PC-9 (cell line): ENCODE measurements at regions of chr5 and their contacts with region 1.

Region 1: DNA sequence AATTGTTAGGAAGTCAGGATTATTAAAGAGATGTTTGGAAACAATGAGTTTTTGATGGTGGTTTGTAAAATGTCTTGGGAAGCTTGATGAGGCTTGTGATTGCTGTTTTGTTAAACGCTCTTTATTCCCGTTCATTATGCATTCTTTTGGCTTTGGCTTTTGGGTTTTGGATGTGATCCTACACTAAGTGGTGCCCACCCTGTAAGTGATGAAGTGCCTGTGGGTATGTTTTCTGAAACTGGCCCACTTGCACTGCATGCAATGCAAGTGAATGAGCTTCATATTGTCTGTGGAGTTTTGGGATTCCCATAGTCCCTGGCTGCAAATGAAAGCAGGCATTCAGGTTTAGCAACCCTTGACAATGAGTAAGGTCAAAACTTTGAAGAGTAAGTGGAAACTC is 1035.5 kb upstream of the WWC1 start:
- DNase-seq: no peak
- H3K4me3 ChIP-seq: no peak overlapping the region
- H3K27ac ChIP-seq: no peak overlapping the region
- H3K4me1 ChIP-seq: no peaks in the 10 kb centered on the region
- H3K27me3 ChIP-seq: no peaks in the 10 kb centered on the region
- CTCF ChIP-seq: no peak

Region 2: DNA sequence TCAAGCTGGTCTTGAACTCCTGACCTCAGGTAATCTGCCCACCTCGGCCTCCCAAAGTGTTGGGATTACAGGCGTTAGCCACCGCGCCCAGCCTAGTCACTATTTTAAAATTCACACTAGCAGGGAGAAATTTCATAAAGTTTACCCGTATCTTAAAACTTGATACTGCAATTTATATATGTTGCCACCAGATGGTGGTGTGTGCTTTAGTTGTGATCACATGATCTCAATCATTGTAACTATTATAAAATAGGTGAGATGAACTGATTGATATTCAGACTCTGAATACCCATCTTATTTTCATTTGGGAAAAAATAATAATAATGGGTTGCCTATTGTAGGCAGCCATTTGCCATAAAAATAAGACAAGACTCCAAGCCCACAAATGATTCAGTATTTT is 294.9 kb before region 1 on chr5:
- CTCF ChIA-PET with region 1: no interaction called
- POLR2A ChIA-PET with region 1: no interaction called
- intact Hi-C with region 1: no loop called
- DNase-seq: no peak
- H3K4me3 ChIP-seq: no peak overlapping the region
- H3K27ac ChIP-seq: no peak overlapping the region
- H3K4me1 ChIP-seq: no peaks in the 10 kb centered on the region
- H3K27me3 ChIP-seq: 0 out of 2 replicates have a peak, but pooled peaks cover 3% of the 10 kb centered on the region
- CTCF ChIP-seq: peak; percentile 53

Region 3: GRCh38 chr5:167226386-167226785 is 29.5 kb before region 1 on chr5:
- CTCF ChIA-PET with region 1: no interaction called
- POLR2A ChIA-PET with region 1: no interaction called
- intact Hi-C with region 1: no loop called
- DNase-seq: no peak
- H3K4me3 ChIP-seq: no peak overlapping the region
- H3K27ac ChIP-seq: no peak overlapping the region
- H3K4me1 ChIP-seq: no peaks in the 10 kb centered on the region
- H3K27me3 ChIP-seq: no peaks in the 10 kb centered on the region
- CTCF ChIP-seq: no peak

Region 4: DNA sequence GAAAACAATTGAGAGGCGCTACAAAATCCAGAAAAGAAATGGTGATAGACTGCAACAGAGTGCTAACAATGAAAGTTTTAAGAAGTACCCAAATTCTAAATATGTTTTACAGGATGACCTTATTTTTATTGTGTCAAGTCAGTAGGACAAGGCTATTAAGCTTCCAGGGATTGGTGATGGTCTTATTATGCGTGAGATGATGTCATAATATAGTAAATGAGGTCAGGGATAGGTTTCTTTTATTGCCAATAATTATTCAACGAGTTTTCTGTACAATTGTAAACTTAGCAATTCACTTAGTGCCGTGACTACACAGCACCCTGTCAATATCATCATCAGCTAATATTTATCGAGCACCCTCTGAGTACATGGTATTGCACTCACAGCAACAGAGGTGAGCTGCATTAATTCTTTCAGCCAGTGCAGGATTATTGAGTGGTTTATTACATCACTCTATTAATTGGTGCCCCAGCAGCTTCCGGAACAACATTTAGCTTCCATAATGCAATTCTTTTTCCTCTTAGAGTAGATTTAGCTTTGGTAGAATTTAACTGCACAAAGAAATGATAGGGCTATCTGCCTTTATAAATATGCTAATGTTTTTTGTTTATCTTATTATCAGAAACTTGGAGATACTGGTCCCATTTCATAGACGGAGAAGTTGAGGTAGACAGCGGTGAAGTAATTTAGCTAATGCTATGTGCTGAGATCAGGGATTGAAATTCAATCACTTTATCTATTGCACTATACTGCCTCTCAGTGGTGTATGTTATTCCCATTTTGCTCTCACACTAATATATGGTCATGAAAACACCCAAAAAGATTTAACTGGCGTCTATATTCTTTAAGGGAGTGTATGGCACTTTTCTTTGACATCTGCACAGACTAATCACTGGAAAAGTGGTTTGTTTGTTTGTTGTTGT is 309.4 kb after region 1 on chr5:
- CTCF ChIA-PET with region 1: no interaction called
- POLR2A ChIA-PET with region 1: no interaction called
- intact Hi-C with region 1: loop called (anchors 10 kb)
- DNase-seq: no peak
- H3K4me3 ChIP-seq: no peak overlapping the region
- H3K27ac ChIP-seq: no peak overlapping the region
- H3K4me1 ChIP-seq: no peaks in the 10 kb centered on the region
- H3K27me3 ChIP-seq: peaks cover 57% of the 10 kb centered on the region
- CTCF ChIP-seq: peak; percentile 52; the same call in 1 of the 2 replicates